SK-N-SH (cell line): ENCODE measurements at regions of chr3 and their contacts with region 1.

Region 1: DNA sequence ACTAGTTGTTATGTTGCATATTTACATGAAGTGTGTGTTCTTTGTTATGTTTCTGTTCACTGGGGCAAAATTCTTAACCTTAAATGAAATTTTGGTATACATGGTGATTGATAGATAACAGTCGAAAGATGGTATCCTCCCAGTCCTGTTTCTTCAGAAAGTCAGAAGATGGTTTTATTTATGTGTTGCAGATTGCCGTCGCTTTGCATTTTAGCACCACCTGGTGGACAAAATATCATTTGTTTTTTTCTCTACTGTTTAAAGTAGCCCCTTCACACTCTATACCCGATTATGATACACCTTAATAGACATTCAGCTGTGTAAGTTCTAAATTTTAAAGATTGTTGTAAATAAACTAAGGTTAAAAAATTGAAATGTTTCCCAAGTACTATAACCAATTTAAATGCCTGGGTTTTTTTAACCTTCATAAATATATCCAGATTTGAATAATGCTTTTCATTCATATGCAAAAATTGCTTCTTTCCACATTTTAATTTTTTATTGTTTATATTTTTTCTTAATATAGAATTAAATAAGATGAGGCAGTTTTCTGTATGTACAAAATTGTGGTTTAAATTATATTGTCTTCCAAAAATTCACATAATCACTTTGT is 152.2 kb downstream of the ALCAM start:
- DNase-seq: peak; percentile 49
- H3K4me3 ChIP-seq: peak overlapping the region in 1 of 2 experiments; percentile 12; a peak in 1 of 4 replicates
- H3K27ac ChIP-seq: peak overlapping the region; percentile 8 to 53; a peak in 3 of 4 replicates
- H3K4me1 ChIP-seq: peaks cover 14 to 29% of the 10 kb centered on the region in 2 experiments
- H3K27me3 ChIP-seq: no peaks in the 10 kb centered on the region
- CTCF ChIP-seq: peak; percentile 79
- EP300 ChIP-seq: peak in 1 of 2 experiments; percentile 43; a peak in 1 of 4 replicates
- RAD21 ChIP-seq: peak; percentile 92

Region 2: GRCh38 chr3:105505170-105505569 is 13.7 kb before region 1 on chr3:
- CTCF ChIA-PET with region 1: interaction called, 12 read pairs
- POLR2A ChIA-PET with region 1: no interaction called
- DNase-seq: no peak
- H3K4me3 ChIP-seq: no peak overlapping the region
- H3K27ac ChIP-seq: no peak overlapping the region
- H3K4me1 ChIP-seq: peaks cover 19 to 22% of the 10 kb centered on the region in 2 experiments; a peak in 3 of 4 replicates
- H3K27me3 ChIP-seq: no peaks in the 10 kb centered on the region
- CTCF ChIP-seq: no peak
- EP300 ChIP-seq: no peak
- RAD21 ChIP-seq: no peak